ENCODE measurements at regions of chr11 and their contacts with region 1.

Region 1: GRCh38 chr11:63951779-63952536 is 13.2 kb downstream of the NAA40 start:
- DNase-seq: no peak
- H3K4me3 ChIP-seq: no peak overlapping the region
- H3K27me3 ChIP-seq: no peaks in the 10 kb centered on the region
- CTCF ChIP-seq: no peak

Region 2: GRCh38 chr11:63879598-63880402 is 72.2 kb before region 1 on chr11:
- CTCF ChIA-PET with region 1: interaction called, 3 read pairs
- POLR2A ChIA-PET with region 1: interaction called, 17 read pairs
- DNase-seq: no peak
- H3K4me3 ChIP-seq: no peak overlapping the region
- H3K27me3 ChIP-seq: no peaks in the 10 kb centered on the region
- CTCF ChIP-seq: no peak